K562 (cell line): ENCODE measurements at regions of chr12 and their contacts with region 1.

Region 1: GRCh38 chr12:68358532-68359485 is 26.6 kb upstream of the MDM1 start:
- DNase-seq: peak; percentile 30 to 72 (median 38)
- ATAC-seq: peak; percentile 82
- H3K4me3 ChIP-seq: no peak overlapping the region
- H3K27ac ChIP-seq: no peak overlapping the region
- H3K4me1 ChIP-seq: peaks cover 0 to 15% of the 10 kb centered on the region in 2 experiments; a peak in 3 of 5 replicates
- H3K27me3 ChIP-seq: peaks cover 0 to 7% of the 10 kb centered on the region in 2 experiments; a peak in 2 of 5 replicates
- CTCF ChIP-seq: peak; percentile 44 to 71 (median 64)
- EP300 ChIP-seq: no peak
- POLR2A ChIP-seq: no peak
- RAD21 ChIP-seq: peak; percentile 58 to 87

Region 2: GRCh38 chr12:68497702-68498101 is 138.9 kb after region 1 on chr12:
- CTCF ChIA-PET with region 1: no interaction called
- POLR2A ChIA-PET with region 1: no interaction called
- in situ Hi-C with region 1: no loop called
- intact Hi-C with region 1: loop called (anchors 10 kb)
- DNase-seq: peak in 2 of 4 experiments; percentile 33 to 75
- ATAC-seq: peak; percentile 73
- H3K4me3 ChIP-seq: no peak overlapping the region
- H3K27ac ChIP-seq: no peak overlapping the region
- H3K4me1 ChIP-seq: peaks cover 0 to 8% of the 10 kb centered on the region in 2 experiments; a peak in 3 of 5 replicates
- H3K27me3 ChIP-seq: peaks cover 7 to 20% of the 10 kb centered on the region in 2 experiments; a peak in 3 of 5 replicates
- CTCF ChIP-seq: no peak
- EP300 ChIP-seq: peak; percentile 50; the same call in 1 of the 2 replicates
- POLR2A ChIP-seq: no peak
- RAD21 ChIP-seq: peak in 1 of 2 experiments; percentile 21; a peak in 1 of 4 replicates

Region 3: DNA sequence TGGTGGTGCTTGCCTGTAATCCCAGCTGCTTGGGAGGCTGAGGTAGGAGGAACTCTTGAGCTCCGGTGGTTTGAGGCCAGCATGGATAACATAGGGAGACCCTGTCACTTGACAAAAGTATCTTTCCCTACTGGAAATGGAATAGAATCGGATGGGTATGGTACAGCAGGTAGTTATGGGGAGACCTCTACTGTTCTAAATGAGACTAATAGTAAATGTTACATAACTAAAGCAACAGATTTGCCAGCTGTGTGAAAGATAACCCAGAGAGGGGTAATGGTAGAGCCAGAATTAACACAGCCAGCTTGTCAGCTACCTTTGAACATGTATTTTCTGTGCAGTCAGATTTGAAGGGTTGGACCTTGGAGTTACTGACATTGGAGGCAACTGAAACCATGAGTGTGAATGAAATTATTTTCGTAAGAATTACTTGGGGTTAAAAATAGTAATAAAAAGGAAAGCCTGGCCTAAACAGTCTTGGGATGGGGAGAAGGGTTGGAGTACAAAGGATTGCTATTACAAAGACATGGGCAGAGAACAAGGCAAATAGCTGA is 306.3 kb after region 1 on chr12:
- CTCF ChIA-PET with region 1: no interaction called
- POLR2A ChIA-PET with region 1: no interaction called
- in situ Hi-C with region 1: no loop called
- intact Hi-C with region 1: loop called (anchors 1 kb)
- DNase-seq: peak in 2 of 4 experiments; percentile 11 to 13
- ATAC-seq: peak; percentile 68
- H3K4me3 ChIP-seq: no peak overlapping the region
- H3K27ac ChIP-seq: no peak overlapping the region
- H3K4me1 ChIP-seq: no peaks in the 10 kb centered on the region; a peak in 1 of 5 replicates
- H3K27me3 ChIP-seq: no peaks in the 10 kb centered on the region
- CTCF ChIP-seq: peak in 2 of 3 experiments; percentile 17 to 42; a peak in 3 of 6 replicates
- EP300 ChIP-seq: no peak
- POLR2A ChIP-seq: peak; percentile 7
- RAD21 ChIP-seq: peak; percentile 20 to 58; a peak in 3 of 4 replicates